H1 (cell line): ENCODE measurements at regions of chr5 and their contacts with region 1.

Region 1: GRCh38 chr5:96381526-96381925 is 51.5 kb downstream of the PCSK1 start:
- DNase-seq: no peak
- H3K4me3 ChIP-seq: no peak overlapping the region
- H3K27ac ChIP-seq: no peak overlapping the region
- H3K4me1 ChIP-seq: 0 out of 7 replicates have a peak, but pooled peaks cover 0 to 5% (median 0%) of the 10 kb centered on the region in 4 experiments
- H3K27me3 ChIP-seq: no peaks in the 10 kb centered on the region
- CTCF ChIP-seq: peak in 2 of 3 experiments; percentile 18; a peak in 3 of 4 replicates
- EP300 ChIP-seq: no peak
- POLR2A ChIP-seq: no peak
- RAD21 ChIP-seq: peak; percentile 39 to 44

Region 2: DNA sequence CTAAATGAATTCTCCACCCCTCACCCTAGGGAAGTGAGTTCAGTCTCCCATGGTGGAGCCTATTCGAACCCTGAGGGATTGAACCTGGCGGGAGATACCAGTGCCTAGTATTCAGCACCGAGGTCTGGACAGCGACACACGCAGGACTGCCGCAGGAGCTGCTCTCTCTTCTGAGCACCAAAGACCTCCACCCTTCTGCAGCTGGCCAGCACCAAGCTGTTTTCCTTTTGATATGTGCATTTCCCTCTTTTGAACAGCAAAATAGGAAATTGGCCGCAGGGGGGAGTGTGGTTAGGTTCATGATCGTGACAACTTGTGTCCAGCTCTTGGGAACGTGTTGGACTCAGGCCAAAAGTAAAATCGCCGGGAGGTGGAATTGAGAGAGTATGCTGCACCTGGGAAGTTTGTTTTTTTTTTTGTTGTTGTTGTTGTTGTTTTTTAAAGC is 52.7 kb after region 1 on chr5:
- CTCF ChIA-PET with region 1: interaction called, 11 read pairs
- POLR2A ChIA-PET with region 1: no interaction called
- DNase-seq: peak in 1 of 2 experiments; percentile 87
- H3K4me3 ChIP-seq: peak overlapping the region; percentile 4 to 86 (median 34); a peak in 6 of 8 replicates
- H3K27ac ChIP-seq: no peak overlapping the region
- H3K4me1 ChIP-seq: peaks cover 0 to 9% (median 5%) of the 10 kb centered on the region in 4 experiments; a peak in 4 of 7 replicates
- H3K27me3 ChIP-seq: peaks cover 4 to 37% (median 33%) of the 10 kb centered on the region in 4 experiments
- CTCF ChIP-seq: peak in 1 of 3 experiments; percentile 5; a peak in 1 of 4 replicates
- EP300 ChIP-seq: no peak
- POLR2A ChIP-seq: no peak
- RAD21 ChIP-seq: peak; percentile 25 to 26